Activated T-helper 1 cell treated with anti-CD3 and anti-CD28 coated beads, Interleukin-12 subunit alpha, Interleukin-12 subunit beta, Interleukin-2, Interleukin-4 antibody, amounts not matched to agents 30 ng/mL and 10 ng/mL and 1 ng/mL, durations not matched to agents 14 hours and 24 hours and 36 hours (primary cell): ENCODE measurements at regions of chr2 and their contacts with region 1.

Region 1: GRCh38 chr2:69643602-69644505 is at the start of gene AAK1:
- DNase-seq: peak; percentile 76
- H3K4me3 Mint-ChIP-seq: peak within 1 kb of the TSS; percentile 92
- H3K27ac Mint-ChIP-seq: peak within 1 kb of the TSS; percentile 95
- H3K4me1 Mint-ChIP-seq: peaks cover 71% of the 10 kb centered on the region
- H3K27me3 Mint-ChIP-seq: no peaks in the 10 kb centered on the region
- total RNA-seq, gene AAK1: 89.2 and 94.0 TPM in 2 replicates

Region 2: DNA sequence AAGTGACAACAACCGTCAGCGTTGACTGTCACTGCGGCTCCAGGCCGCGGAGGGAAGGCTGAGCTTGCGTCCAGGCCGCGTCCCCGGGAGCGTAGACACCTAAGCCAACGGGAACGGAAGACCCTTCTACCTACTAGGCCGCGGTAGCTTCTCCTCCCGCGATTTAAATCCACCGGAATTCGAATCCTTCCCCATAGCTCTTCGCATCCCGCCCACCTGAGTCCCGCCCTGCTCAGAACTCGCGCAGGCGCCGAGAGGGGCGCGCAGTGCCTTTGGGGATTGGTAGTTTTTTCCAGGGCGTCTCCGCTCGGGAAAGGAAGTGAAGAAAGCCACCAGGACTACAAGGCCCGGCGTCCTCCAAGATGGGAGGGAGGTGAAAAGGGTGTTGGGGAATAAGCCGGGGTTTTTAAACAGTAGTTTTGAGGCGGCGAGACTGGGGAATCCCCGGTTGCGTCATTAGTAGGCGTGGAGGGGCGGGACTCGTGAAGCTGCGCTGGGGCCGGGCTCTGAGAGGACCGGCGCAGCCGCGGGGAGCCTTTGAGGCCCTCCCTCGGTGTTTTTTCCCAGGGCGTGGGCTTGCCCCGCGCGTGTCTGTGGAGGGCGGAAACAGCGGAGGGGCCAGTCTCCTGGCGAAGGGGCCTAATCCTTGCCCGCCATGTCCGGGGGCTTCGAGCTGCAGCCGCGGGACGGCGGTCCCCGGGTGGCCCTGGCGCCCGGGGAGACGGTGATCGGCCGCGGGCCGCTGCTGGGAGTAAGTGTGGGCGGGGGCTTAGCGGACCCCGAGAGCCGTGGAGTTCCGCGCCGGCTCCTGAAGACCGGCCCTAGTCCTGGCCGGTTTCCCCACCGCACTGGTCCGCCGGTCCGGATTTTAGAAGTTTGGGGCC is 1176.5 kb before region 1 on chr2 and contains the starts of genes APLF and FBXO48:
- intact Hi-C with region 1: loop called (anchors 1 kb)
- DNase-seq: peak; percentile 97
- H3K4me3 Mint-ChIP-seq: peak within 1 kb of the TSS; percentile 97
- H3K27ac Mint-ChIP-seq: peak within 1 kb of the TSS; percentile 91
- H3K4me1 Mint-ChIP-seq: peaks cover 48% of the 10 kb centered on the region
- H3K27me3 Mint-ChIP-seq: no peaks in the 10 kb centered on the region
- total RNA-seq, gene APLF: 2.3 and 3.0 TPM in 2 replicates
- total RNA-seq, gene FBXO48: 1.3 and 1.4 TPM in 2 replicates

Region 3: GRCh38 chr2:69509007-69509749 is 134.7 kb before region 1 on chr2:
- intact Hi-C with region 1: loop called (anchors 1 kb)
- DNase-seq: no peak
- H3K4me3 Mint-ChIP-seq: no peak overlapping the region
- H3K27ac Mint-ChIP-seq: peak overlapping the region; percentile 83
- H3K4me1 Mint-ChIP-seq: peaks cover 37% of the 10 kb centered on the region
- H3K27me3 Mint-ChIP-seq: no peaks in the 10 kb centered on the region

Region 4: GRCh38 chr2:69625078-69625795 is 18.6 kb before region 1 on chr2:
- intact Hi-C with region 1: loop called (anchors 1 kb)
- DNase-seq: no peak
- H3K4me3 Mint-ChIP-seq: no peak overlapping the region
- H3K27ac Mint-ChIP-seq: no peak overlapping the region
- H3K4me1 Mint-ChIP-seq: peaks cover 20% of the 10 kb centered on the region
- H3K27me3 Mint-ChIP-seq: no peaks in the 10 kb centered on the region

Region 5: GRCh38 chr2:69683101-69683971 is 39.5 kb after region 1 on chr2:
- intact Hi-C with region 1: no loop called
- DNase-seq: no peak
- H3K4me3 Mint-ChIP-seq: peak overlapping the region; percentile 27
- H3K27ac Mint-ChIP-seq: peak overlapping the region; percentile 83
- H3K4me1 Mint-ChIP-seq: peaks cover 51% of the 10 kb centered on the region
- H3K27me3 Mint-ChIP-seq: no peaks in the 10 kb centered on the region

Region 6: DNA sequence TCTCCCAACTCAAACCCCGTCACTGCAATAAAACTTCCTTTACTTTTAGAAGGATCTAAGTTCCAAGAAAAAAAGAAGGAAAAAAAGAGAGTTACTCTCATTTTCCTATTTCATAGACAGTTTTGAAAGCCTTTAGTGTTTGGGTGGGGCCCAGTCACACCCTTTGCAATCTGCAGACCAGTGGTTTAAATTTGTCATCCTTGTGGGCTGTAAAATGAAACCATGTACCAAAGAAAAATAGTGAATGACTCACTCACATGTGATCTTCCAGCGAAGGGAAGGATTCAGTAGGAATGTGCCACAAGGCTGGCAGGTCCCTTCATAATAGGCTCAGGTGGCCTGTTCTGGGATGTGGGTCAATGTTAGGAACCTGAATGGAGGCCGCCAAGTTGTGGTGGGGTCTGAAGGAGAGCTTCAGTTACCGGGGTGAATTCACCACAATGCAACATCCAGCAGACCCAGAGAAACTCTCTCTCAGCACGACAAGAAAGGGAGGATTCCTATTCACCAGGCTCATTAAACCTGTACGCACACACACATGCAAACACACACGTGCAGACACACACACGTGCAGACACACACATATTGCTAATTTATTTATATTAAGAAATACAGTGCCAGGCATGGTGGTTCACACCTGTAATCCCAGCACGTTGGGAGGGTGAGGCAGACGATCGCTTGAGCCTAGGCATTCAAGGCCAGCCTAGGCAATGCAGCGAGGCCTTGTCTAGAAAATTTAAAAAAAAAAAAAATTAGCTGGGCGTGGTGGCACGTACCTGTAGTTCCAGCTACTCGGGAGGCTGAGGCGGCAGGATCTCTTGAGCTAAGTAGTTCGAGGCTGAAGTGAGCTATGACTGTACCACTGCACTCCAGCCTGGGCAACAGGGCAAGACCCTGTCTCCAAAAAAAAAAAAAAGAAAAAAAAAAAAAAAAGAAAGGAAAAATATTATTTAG is 126.6 kb after region 1 on chr2:
- intact Hi-C with region 1: loop called (anchors 5 kb)
- DNase-seq: peak; percentile 26
- H3K4me3 Mint-ChIP-seq: peak overlapping the region; percentile 51
- H3K27ac Mint-ChIP-seq: peak overlapping the region; percentile 81
- H3K4me1 Mint-ChIP-seq: peaks cover 80% of the 10 kb centered on the region
- H3K27me3 Mint-ChIP-seq: no peaks in the 10 kb centered on the region

Region 7: DNA sequence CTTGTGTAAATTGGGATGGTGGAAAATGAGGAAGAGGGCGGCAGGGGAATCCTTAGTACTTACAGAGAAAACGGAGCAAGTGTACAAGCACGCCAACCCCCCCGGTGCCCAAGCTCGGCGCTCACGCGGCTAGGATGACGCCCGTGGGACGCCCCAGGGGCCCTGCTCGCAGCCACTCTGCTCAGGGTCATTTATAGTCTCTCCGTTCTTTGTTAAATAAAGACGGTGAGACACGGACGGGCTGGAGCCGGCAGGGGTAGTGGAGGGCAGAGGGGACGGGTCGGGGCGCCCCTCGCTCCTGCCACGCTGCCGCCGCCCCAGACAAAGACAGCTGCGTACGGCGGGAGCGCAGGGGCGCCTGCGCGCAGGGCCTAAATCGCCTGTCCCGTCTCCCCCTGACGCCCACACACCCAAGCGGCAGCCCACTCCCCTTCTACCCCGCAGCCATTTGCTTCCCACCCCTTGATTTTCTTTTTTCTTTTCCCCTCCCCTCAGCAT is 481.2 kb after region 1 on chr2:
- intact Hi-C with region 1: loop called (anchors 10 kb)
- DNase-seq: peak; percentile 42
- H3K4me3 Mint-ChIP-seq: peak overlapping the region; percentile 93
- H3K27ac Mint-ChIP-seq: peak overlapping the region; percentile 99
- H3K4me1 Mint-ChIP-seq: peaks cover 78% of the 10 kb centered on the region
- H3K27me3 Mint-ChIP-seq: no peaks in the 10 kb centered on the region

Region 8: DNA sequence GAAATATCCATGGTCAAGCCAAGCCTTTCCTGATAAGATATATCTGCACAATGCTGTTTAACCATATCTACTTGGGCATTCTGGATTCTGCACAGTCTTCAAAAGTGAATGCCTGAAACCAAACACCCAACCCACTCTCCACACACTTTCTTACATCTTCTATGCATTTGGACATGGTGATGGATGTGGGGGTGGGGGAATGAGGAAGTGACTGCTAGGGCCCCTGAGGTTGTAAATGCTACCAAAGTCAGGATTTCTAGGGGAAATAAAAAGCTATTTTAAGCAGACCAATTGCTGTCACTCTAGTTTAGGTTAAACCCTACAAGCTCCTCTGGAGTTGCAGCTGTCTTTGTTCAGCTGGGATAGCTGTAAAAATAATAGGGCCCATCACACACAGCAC is 936.5 kb after region 1 on chr2:
- intact Hi-C with region 1: no loop called
- DNase-seq: no peak
- H3K4me3 Mint-ChIP-seq: no peak overlapping the region
- H3K27ac Mint-ChIP-seq: no peak overlapping the region
- H3K4me1 Mint-ChIP-seq: no peaks in the 10 kb centered on the region
- H3K27me3 Mint-ChIP-seq: peaks cover 11% of the 10 kb centered on the region